Uterus (tissue), 4 donors: ENCODE measurements at regions of chr18 and their contacts with region 1.

Region 1: GRCh38 chr18:35240664-35241447 is at the start of gene ZNF397:
- DNase-seq: peak; percentile 97 to 98
- H3K4me3 ChIP-seq: peak within 1 kb of the TSS; percentile 75 to 89
- H3K27ac ChIP-seq: peak within 1 kb of the TSS; percentile 97 to 99
- H3K4me1 ChIP-seq: peaks cover 0 to 4% of the 10 kb centered on the region in 2 donors
- H3K27me3 ChIP-seq: no peaks in the 10 kb centered on the region
- CTCF ChIP-seq: peak in 1 of 4 experiments; percentile 35
- POLR2A ChIP-seq: peak; percentile 97
- total RNA-seq, gene ZNF397: 6.1 to 69.5 (median 31.7) TPM

Region 2: GRCh38 chr18:34976899-34977837 is 263.7 kb before region 1 on chr18:
- intact Hi-C with region 1: no loop called
- DNase-seq: peak; percentile 49 to 54
- H3K4me3 ChIP-seq: peak overlapping the region; percentile 65 to 66
- H3K27ac ChIP-seq: peak overlapping the region in 1 of 2 donors; percentile 12
- H3K4me1 ChIP-seq: no peaks in the 10 kb centered on the region
- H3K27me3 ChIP-seq: no peaks in the 10 kb centered on the region
- CTCF ChIP-seq: no peak
- POLR2A ChIP-seq: no peak

Region 3: DNA sequence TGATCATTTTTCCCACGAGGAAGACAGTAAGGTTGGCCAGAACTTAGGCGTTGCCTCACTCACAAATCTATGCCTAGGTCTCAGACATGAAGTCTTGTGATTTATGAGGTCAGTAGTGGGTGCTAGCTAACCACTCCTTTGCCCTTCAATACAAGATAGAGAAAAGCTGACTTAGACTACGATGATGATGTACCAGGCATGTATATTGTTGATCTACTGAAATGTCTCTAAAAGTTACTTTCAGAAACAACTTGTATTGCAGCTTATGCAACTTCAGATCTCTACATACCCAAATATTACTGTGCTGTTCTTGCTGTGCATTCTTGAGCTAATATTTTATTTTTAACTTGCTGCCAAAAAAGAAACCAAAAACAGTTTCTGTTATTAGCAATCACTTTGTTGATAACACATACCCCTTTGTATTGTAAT is 169.0 kb before region 1 on chr18:
- intact Hi-C with region 1: no loop called
- DNase-seq: no peak
- H3K4me3 ChIP-seq: no peak overlapping the region
- H3K27ac ChIP-seq: peak overlapping the region in 1 of 2 donors; percentile 8
- H3K4me1 ChIP-seq: no peaks in the 10 kb centered on the region
- H3K27me3 ChIP-seq: no peaks in the 10 kb centered on the region
- CTCF ChIP-seq: no peak
- POLR2A ChIP-seq: no peak

Region 4: DNA sequence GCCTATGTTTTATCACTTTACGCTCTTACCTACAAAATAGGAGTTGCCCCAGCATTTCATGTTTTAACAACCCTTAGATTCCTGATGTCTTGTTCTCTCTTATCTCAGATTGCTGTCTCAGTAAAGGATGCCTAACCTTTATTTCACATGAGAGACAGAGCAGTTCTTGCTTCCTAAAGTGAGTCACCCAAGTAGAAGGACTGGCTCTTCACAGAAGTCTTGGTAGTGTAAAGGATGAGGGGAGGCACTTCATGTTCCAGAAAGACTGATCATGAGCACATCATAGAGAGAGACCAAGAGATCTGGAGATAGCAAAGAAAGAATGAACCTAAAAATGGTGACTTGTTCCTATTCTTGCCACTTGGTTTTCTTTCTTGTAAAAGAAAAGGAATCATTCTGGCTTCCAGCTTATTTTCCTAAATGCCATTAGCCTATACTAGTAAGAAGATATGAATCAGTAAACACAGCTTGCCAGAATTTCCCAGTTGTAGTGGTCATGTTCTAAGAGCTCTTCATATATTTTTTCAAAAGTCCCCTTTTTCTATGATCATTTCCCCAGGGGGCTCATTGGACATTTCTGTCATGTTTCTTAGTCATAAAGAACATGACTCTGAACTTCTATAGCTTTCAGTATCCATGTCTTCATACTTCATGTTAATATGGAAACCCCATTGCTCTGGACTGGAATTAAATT is 144.7 kb before region 1 on chr18:
- intact Hi-C with region 1: no loop called
- DNase-seq: no peak
- H3K4me3 ChIP-seq: no peak overlapping the region
- H3K27ac ChIP-seq: no peak overlapping the region
- H3K4me1 ChIP-seq: no peaks in the 10 kb centered on the region
- H3K27me3 ChIP-seq: no peaks in the 10 kb centered on the region
- CTCF ChIP-seq: no peak
- POLR2A ChIP-seq: no peak

Region 5: DNA sequence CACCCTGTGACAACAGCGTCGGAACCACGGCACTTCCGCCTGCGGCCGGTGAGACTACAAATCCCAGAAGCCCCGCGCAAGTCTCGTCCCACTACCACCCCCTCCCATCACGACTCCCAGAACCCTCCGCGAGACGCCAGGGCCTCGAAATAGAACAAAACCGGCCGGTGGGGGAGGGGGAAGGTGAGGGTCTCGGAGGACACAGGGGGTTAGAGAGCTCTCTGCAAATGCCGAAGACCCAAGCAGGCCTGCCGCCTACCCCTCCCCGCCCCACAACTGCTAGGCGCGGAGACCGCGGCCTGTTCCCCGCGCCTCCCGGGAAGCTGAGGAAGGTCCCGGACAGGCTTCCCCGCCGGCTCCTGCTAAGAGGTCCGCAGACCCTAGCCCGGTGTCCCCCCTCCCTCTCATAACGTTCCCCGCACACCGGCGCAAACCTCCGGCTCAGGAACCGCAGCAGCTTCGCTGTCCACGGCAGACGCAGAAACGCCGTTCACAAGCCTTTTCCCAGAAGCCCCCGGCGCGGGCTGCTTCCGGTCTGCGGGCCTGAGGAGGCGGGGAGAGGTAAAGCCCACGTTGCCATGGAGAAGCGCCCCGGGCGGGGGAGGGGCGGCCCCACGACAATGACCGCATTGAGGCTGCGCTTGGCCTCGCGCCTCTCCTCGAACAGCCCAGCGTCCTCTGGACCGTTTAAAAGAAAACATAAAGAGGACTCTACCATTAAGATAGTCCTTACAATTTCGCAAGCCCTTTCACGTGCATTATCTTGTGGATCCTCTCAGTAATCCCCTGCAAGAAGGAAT is 103.3 kb after region 1 on chr18 and contains the start of gene ZNF24:
- intact Hi-C with region 1: loop called (anchors 10 kb)
- DNase-seq: peak; percentile 94 to 95
- H3K4me3 ChIP-seq: peak within 1 kb of the TSS; percentile 96 to 100
- H3K27ac ChIP-seq: peak within 1 kb of the TSS; percentile 99 to 100
- H3K4me1 ChIP-seq: no peaks in the 10 kb centered on the region
- H3K27me3 ChIP-seq: no peaks in the 10 kb centered on the region
- CTCF ChIP-seq: no peak
- POLR2A ChIP-seq: peak in 1 of 2 donors; percentile 83
- total RNA-seq, gene ZNF24: 22.0 to 86.7 (median 42.8) TPM